Left colon (tissue), 2 donors: ENCODE measurements at regions of chr7 and their contacts with region 1.

Region 1: DNA sequence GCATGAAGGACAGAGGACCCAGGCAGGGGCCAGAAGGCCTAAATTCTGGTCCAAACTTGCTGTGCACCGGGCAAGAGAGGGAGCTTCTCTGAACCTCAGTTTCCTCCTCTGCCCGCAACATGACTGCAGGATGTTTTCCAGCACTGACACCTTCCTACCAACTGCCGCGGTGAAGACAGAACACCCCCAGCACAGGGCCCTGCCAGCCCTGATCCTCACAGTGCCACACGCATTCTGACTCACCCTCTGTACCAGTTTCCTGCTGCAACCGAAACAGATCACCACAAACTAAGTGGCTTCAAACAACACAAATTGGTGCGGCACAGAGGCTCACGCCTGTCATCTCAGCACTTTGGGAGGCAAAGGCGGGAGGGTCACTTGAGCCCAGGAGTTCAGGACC is 18.1 kb downstream of the MAD1L1 start:
- DNase-seq: no peak
- ATAC-seq: no peak

Region 2: DNA sequence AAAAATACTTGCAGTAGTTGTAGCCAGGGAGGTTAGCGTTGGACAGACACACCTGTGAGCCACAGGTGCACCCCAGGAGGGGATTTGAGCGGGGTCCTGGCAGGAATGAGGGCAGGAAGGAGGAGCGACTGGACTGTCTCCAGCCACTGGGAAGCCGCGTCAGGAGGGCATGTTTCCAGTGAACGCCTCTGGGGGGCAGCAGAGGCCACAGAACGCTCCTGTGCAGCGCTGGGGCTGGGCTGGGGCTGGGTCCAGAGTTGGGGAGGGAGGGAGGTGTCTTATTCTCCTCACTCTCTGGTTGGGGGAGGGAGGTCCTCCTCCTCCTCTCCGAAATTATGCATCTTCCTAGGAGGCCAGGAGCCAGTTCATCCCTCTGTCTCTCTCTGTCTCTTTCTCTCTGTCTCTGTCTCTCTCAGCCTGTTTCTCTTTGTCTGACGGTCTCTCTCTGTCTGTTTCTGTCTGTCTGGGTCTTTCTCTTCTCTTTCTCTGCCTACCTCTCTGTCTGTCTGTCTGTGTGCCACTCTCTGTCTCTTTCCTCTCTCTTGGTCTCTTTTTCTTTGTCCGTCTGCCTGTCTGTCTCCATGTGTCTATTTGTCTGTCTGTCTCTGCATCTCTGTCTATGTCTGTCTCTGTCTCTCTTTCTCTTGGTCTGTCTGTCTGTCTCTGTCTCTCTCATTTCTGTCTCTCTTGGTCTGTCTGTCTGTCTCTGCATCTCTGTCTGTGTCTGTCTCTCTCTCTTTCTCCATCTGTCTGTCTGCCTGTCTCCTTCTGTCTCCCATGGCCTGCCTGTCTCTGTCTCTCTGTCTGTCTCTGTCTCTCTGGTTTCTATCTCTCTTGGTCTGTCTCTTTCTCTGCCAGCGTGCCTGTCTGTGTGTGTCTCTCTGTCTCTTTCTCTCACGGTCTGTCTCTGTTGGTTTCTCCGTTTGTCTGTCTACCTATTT is 634.9 kb before region 1 on chr7:
- intact Hi-C with region 1: loop called in 1 of 2 experiments (anchors 5 kb)
- DNase-seq: peak; percentile 40 to 73
- ATAC-seq: peak; percentile 97

Region 3: DNA sequence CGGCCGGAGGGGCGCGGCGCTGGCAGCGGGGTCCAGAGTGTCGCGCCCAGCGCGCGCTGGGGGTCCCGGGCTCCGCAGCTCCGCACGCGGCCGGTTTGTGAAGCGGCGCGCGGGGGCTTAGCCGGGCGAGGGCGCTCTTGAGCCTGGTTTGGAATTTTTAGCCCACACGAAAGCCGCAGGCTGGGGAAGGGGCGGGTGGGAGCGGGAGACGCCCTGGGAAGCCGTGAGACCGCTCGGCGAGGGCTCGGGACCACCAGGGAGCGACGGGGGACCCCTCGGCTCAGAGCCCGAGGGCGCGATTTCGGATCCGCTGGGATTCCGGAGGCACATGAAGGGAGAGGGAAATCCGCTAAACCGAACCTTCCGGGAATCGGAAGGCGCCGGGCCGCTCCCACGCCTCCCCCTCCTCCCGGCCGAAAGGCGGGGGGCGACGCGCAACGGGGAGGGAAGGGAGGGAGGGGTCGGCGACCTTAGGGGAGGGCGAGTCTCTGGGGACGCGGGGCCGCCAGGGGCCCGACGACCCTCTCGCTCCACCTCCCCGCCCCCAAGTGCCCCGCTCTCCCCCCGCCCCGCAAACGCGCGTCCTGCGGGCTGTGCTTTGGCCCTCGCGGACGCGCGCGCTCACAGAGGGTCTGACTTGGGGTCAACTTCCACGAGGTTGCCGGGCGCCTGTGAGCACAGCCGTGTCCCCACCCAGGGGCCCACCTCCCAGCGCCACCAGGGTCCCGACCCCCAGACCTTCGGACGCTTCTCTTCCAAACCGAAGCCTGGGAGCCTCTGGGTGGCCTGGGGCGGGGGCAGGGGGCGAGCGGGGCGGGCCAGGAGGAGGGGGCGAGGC is 549.7 kb before region 1 on chr7:
- intact Hi-C with region 1: loop called in 1 of 2 experiments (anchors 10 kb)
- DNase-seq: peak; percentile 25 to 71
- ATAC-seq: peak; percentile 47

Region 4: GRCh38 chr7:2019607-2020511 is 194.8 kb before region 1 on chr7:
- intact Hi-C with region 1: no loop called
- DNase-seq: peak; percentile 51 to 65
- ATAC-seq: peak; percentile 56

Region 5: GRCh38 chr7:2148189-2148588 is 66.4 kb before region 1 on chr7:
- intact Hi-C with region 1: no loop called
- DNase-seq: no peak
- ATAC-seq: no peak